Activated B cell treated with CpG ODN at 0.5 μM for 24 hours (primary cell): ENCODE measurements at regions of chr9 and their contacts with region 1.

Region 1: DNA sequence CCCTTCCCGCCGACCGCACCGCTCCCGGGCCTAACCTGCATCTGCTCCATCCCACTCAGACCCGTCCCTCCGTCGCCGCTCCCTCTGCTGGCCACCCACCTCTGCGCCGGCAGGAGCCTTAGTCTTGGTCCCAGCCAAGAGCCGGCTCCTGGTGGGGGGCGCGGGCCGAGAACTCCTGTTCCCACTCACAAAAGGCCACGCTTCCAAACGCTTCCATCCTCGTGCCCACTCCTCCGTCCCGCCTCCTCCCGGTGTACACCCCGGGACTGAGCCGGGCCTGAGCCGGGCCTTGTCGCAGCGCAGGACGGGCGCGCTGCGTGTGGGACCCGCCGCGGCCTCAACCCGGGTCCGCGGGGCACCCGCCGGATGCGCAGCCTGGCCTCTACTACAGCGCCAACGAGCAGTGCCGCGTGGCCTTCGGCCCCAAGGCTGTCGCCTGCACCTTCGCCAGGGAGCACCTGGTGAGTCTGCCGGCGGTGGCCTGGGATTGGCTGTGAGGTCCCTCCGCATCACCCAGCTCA is 7.5 kb downstream of the ADAMTS13 start:
- DNase-seq: peak; percentile 40
- ATAC-seq: peak; percentile 74
- H3K4me3 Mint-ChIP-seq: peak overlapping the region; percentile 74
- H3K27ac Mint-ChIP-seq: no peak overlapping the region
- H3K4me1 Mint-ChIP-seq: peaks cover 13% of the 10 kb centered on the region
- H3K27me3 Mint-ChIP-seq: peaks cover 16% of the 10 kb centered on the region
- CTCF ChIP-seq: no peak

Region 2: DNA sequence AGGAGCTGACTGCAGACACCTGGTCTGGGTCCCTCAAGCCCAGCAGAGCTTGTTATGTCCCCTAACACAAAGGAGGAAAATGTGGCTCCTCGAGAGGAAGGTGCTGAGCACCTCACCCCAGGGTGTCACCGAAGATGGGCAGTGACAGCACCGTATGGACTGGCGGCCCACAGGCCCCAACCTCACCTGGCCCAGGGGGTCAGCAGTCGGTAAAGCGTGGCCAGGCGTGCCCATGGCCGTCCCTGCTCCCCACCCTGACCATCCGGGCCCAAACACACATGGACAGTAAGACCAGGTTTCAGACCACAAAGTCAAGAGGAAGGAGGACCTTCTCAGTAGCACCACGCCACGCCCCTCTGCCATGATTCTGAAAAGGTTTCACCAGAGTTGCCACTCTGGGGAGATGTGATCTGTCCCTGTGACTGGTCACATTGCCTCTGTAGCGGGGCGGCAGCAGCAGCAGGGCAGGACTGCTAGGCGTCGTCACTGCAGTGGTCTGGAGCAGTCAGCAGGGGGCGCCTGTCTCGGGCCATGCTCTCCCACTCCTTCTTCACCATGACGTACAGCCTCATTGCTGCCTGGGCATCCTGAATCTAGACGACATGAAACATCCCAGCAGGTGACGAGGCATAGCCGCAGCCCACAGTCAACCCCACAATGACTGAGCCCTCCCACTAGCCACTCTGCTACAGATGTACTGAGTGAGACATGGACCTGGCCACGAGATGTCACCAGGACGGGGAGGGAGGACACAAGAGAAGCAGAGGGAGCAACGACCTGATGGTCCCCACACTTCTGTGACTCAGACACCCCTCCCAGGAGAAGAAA is 23.0 kb before region 1 on chr9:
- CTCF ChIA-PET with region 1: no interaction called
- POLR2A ChIA-PET with region 1: no interaction called
- intact Hi-C with region 1: loop called (anchors 2 kb)
- DNase-seq: peak; percentile 71
- ATAC-seq: peak; percentile 95
- H3K4me3 Mint-ChIP-seq: no peak overlapping the region
- H3K27ac Mint-ChIP-seq: peak overlapping the region; percentile 61
- H3K4me1 Mint-ChIP-seq: peaks cover 6% of the 10 kb centered on the region
- H3K27me3 Mint-ChIP-seq: no peaks in the 10 kb centered on the region
- CTCF ChIP-seq: peak; percentile 56

Region 3: DNA sequence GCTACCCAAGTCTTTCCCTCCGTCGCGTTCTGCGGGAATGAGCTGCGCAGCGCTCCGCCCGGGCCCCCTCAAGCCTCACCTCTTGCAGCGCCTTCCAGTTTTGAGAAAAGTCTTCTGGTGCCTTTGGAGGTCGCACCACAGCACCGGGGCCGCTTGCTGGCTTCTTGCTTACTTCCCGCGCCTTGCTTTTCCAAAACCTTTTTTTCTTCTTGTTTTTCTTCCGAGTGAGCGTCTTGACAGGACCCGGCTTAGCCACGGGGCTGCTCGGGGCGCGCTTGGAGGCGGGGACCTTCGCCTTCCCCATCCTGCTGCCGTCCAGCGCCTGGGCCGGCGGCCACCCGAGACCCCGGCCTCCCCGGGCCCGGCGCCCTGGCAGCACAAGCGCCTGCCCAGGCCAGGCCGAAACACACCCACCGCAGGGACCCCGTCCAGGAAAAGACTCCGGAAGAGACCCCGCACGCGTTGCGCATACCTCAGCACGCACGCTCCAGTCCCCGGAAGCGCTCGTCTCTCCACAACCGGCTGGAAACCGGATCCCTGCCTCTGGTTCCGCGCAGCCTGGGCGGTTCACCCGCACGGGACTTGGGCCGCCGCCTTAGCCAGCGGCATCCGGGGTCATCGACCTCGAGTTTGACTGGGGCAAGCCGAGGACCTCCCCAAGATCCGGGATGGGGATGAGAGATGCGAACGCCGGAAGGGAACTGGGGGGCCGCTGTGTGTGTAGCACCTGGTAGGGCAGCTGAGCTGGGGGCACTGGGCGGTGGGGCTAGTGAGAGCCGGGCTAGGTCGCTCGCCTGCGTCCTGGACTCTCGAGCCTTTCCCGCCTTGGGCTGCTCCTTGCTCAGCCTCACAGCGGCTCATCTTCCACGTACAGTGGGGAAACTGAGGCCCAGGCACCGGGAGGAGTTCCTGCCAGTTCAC is 11.9 kb before region 1 on chr9 and contains the start of gene REXO4:
- CTCF ChIA-PET with region 1: interaction called, 3 read pairs
- POLR2A ChIA-PET with region 1: no interaction called
- intact Hi-C with region 1: loop called (anchors 1 kb)
- DNase-seq: peak; percentile 86
- ATAC-seq: peak; percentile 84
- H3K4me3 Mint-ChIP-seq: peak within 1 kb of the TSS; percentile 90
- H3K27ac Mint-ChIP-seq: peak within 1 kb of the TSS; percentile 91
- H3K4me1 Mint-ChIP-seq: peaks cover 71% of the 10 kb centered on the region
- H3K27me3 Mint-ChIP-seq: no peaks in the 10 kb centered on the region
- CTCF ChIP-seq: no peak
- total RNA-seq, gene REXO4: 31.6 and 33.3 TPM in 2 replicates

Region 4: GRCh38 chr9:133440874-133441273 is 11.2 kb after region 1 on chr9:
- CTCF ChIA-PET with region 1: no interaction called
- POLR2A ChIA-PET with region 1: no interaction called
- intact Hi-C with region 1: loop called (anchors 1 kb)
- DNase-seq: peak; percentile 34
- ATAC-seq: peak; percentile 98
- H3K4me3 Mint-ChIP-seq: no peak overlapping the region
- H3K27ac Mint-ChIP-seq: peak overlapping the region; percentile 92
- H3K4me1 Mint-ChIP-seq: peaks cover 30% of the 10 kb centered on the region
- H3K27me3 Mint-ChIP-seq: no peaks in the 10 kb centered on the region
- CTCF ChIP-seq: no peak

Region 5: DNA sequence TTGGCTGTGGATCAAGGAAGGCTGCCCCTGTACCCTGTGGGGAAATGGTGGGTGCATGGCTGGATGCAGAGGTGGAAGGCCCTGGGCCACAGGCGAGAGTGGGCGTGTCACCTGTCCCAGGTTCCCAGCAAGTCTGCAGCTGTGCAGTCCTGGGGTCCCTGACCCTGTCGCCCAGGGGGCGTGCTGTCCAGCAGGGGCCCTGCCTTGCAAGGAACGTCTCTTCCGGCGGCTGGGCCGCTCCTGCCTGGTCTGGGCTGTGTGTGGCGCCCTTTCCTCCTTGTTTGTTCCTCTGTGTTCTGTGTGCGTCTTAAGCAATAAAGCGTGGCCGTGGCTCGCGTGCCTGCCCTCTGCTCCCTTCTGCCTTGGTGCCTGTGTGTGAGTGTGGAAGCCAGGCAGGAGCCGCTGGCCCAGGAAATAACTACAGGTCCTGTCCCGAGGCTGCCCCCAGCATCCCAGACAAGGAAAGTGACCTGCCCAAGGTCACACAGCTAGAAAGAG is 40.8 kb after region 1 on chr9:
- CTCF ChIA-PET with region 1: no interaction called
- POLR2A ChIA-PET with region 1: no interaction called
- intact Hi-C with region 1: no loop called
- DNase-seq: no peak
- ATAC-seq: peak; percentile 19
- H3K4me3 Mint-ChIP-seq: no peak overlapping the region
- H3K27ac Mint-ChIP-seq: no peak overlapping the region
- H3K4me1 Mint-ChIP-seq: peaks cover 6% of the 10 kb centered on the region
- H3K27me3 Mint-ChIP-seq: no peaks in the 10 kb centered on the region
- CTCF ChIP-seq: no peak

Region 6: DNA sequence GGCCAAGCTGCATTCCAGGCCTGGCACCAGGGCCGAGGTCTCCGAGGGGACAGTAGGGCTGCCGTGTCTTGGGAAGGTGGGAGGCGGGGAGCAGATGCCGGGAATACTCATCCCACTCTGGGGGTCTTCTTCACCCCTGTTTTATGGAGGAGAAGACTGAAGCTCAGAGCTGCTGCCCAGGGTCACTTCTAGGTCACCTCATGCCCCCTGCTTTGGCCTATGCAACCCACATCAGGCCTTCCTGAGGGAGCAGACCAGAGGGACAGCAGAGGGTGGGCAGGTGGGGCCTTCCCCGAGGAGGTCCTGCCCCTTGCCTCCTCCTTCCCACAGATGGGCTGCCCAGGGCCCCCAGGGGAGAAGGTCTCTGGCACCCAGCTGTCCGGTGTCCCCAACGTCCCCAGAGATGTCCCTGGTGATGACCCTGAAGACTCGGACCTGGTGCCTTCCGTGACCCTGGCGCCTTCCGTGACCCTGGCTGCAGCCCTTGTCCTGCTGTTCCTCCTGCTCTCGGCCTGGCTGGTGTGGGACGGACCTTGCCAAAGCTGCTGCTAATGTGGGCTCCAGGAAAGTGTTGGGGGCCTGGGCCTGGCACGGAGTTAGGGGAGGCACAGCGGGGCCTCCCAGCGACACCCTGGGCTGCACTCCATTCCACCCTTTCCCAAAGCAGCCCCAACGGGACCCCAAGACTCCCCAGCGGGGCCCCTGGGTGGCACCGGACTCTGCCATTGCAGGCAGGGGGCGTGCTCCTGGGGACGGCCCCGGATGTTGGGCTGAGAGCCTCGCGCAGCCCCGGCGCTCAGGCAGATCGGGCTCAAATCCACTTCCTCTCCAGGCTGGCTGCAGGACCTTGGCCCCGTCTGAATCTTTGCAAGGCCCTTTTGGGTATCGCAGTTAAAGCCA is 55.9 kb after region 1 on chr9:
- CTCF ChIA-PET with region 1: no interaction called
- POLR2A ChIA-PET with region 1: no interaction called
- intact Hi-C with region 1: no loop called
- DNase-seq: no peak
- ATAC-seq: peak; percentile 67
- H3K4me3 Mint-ChIP-seq: peak overlapping the region; percentile 56
- H3K27ac Mint-ChIP-seq: no peak overlapping the region
- H3K4me1 Mint-ChIP-seq: peaks cover 5% of the 10 kb centered on the region
- H3K27me3 Mint-ChIP-seq: peaks cover 1% of the 10 kb centered on the region
- CTCF ChIP-seq: no peak